ENCODE measurements at regions of chr5 and their contacts with region 1.

Region 1: DNA sequence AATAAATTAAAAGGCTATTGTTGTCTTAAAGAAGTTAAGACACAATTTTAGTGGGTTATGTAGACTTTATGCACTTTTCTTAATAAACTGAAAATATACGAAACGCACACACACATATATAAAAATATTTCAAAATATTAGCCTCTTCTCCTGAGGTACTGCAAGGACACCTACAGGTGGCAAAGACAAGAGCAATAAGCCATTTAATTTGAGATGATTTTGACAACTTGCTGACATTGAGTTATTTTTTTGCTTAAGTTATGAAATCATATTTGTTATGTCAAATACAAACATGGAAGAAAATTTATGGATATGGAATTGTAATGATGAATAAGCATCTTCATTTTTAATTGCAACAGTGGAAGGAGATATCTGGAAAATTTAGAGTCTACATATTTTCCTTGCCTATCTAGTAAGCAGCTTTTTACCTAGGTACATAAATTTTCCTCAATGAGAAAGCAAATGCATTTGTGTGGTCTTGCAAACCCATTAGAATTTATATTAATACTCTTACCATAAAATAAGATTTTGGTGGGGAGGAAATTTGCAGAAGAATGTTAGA is 301.6 kb downstream of the ISL1 start:
- DNase-seq: no peak
- H3K4me3 ChIP-seq: no peak overlapping the region
- H3K27ac ChIP-seq: no peak overlapping the region
- H3K4me1 ChIP-seq: no peaks in the 10 kb centered on the region
- H3K27me3 ChIP-seq: no peaks in the 10 kb centered on the region
- CTCF ChIP-seq: peak; percentile 43 to 63

Region 2: DNA sequence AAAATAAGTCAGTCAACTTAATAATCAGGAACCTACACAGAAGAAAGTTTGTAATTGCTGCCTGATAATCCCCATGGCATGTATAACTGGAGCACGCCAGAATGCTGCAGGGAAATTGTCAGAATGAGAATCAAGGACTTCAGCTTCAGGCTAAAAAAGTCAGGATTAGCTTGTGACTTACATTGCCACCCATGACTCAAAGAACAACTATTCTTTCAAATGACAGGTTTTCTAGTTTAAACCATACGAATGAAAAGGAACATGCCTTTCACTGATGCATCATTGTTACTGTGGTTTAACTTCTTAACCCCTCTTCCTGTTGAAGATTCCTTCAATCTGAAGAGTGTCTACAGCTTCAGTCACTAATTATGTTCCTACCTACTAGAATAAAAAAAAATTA is 189.2 kb before region 1 on chr5:
- CTCF ChIA-PET with region 1: no interaction called
- dilution Hi-C with region 1: no loop called
- in situ Hi-C with region 1: no loop called
- intact Hi-C with region 1: loop called (anchors 1 kb)
- DNase-seq: peak; percentile 77
- H3K4me3 ChIP-seq: no peak overlapping the region
- H3K27ac ChIP-seq: no peak overlapping the region
- H3K4me1 ChIP-seq: peaks cover 18% of the 10 kb centered on the region
- H3K27me3 ChIP-seq: no peaks in the 10 kb centered on the region
- CTCF ChIP-seq: no peak

Region 3: GRCh38 chr5:52269401-52269800 is 584.5 kb after region 1 on chr5:
- CTCF ChIA-PET with region 1: no interaction called
- dilution Hi-C with region 1: no loop called
- in situ Hi-C with region 1: no loop called
- intact Hi-C with region 1: no loop called
- DNase-seq: no peak
- H3K4me3 ChIP-seq: peak overlapping the region in 1 of 3 experiments; percentile 6
- H3K27ac ChIP-seq: no peak overlapping the region
- H3K4me1 ChIP-seq: no peaks in the 10 kb centered on the region
- H3K27me3 ChIP-seq: no peaks in the 10 kb centered on the region
- CTCF ChIP-seq: no peak